Mammary epithelial cell (primary cell): ENCODE measurements at regions of chr1 and their contacts with region 1.

Region 1: DNA sequence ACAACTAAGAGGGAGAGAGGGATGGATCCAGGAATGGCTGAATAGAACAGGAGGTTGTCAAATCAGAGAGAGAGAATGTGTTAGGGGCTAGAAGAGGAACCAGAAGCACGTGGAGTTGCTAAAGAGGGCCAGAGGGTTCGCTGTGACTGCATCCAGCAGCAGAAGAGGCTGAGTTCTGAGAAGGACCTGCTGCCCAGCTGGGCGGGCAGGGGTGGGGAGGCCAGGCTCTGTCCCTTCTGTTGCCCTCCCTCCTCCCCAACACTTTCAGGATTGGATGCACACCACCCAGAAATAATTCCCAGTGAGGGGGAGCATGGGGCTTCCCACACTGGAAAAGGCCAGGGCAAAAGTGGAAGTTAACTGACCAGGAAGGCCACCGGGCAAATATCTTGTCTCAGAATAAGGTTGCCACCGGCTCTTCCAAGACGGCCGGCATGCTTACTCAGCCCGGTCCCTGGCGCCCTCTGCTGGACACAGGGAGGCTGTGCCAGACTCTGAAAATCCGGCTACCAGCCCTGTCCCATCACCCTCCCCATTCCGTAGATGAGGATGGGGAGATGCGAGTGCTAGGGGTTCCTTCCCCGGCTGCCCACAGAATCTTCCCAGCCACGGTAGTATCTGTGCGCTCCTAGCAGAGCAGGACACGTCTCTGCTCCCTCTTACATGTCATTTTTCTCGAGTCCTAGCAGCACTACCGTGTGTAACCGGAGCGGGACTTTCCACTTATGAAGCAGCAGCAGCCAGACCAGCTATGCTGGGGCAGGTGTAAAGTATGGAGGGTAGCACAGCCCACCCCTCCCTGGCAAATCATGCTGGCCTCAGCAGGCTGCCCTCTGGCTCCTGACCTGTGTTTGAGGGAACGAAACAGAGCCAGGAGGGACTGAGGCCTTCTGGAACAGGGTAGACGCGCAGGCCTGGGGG is 46.8 kb upstream of the A3GALT2 start:
- DNase-seq: peak; percentile 62
- H3K4me3 ChIP-seq: no peak overlapping the region
- H3K27ac ChIP-seq: no peak overlapping the region
- H3K4me1 ChIP-seq: peaks cover 34% of the 10 kb centered on the region
- H3K27me3 ChIP-seq: no peaks in the 10 kb centered on the region
- CTCF ChIP-seq: peak; percentile 94 to 99

Region 2: DNA sequence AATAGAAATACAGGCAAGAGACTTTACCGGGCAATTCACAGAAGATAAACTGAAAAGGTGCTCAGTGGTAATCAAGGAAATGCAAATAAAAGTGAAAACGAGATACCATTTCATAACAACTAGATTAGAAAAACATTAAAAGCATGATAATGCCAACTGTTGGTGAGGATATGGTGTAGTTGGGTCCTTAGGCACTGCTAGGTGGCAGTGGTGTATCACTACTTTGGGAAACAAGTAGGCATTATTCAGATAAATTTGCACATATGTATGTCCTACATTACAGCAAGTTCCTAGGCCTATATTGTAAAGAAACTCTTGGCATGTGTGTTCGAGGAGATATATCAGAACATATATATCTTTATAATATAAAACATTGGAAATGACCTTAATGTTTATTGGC is 255.8 kb before region 1 on chr1:
- CTCF ChIA-PET with region 1: no interaction called
- dilution Hi-C with region 1: no loop called
- in situ Hi-C with region 1: no loop called
- intact Hi-C with region 1: loop called (anchors 1 kb)
- DNase-seq: peak; percentile 26
- H3K4me3 ChIP-seq: no peak overlapping the region
- H3K27ac ChIP-seq: no peak overlapping the region
- H3K4me1 ChIP-seq: no peaks in the 10 kb centered on the region
- H3K27me3 ChIP-seq: no peaks in the 10 kb centered on the region
- CTCF ChIP-seq: peak; percentile 48 to 62

Region 3: GRCh38 chr1:33295450-33296081 is 72.2 kb before region 1 on chr1:
- CTCF ChIA-PET with region 1: no interaction called
- dilution Hi-C with region 1: no loop called
- in situ Hi-C with region 1: loop called in 1 of 2 experiments (anchors 5 kb)
- intact Hi-C with region 1: loop called (anchors 1 kb)
- DNase-seq: peak; percentile 76
- H3K4me3 ChIP-seq: no peak overlapping the region
- H3K27ac ChIP-seq: no peak overlapping the region
- H3K4me1 ChIP-seq: no peaks in the 10 kb centered on the region
- H3K27me3 ChIP-seq: no peaks in the 10 kb centered on the region
- CTCF ChIP-seq: peak; percentile 94 to 97

Region 4: DNA sequence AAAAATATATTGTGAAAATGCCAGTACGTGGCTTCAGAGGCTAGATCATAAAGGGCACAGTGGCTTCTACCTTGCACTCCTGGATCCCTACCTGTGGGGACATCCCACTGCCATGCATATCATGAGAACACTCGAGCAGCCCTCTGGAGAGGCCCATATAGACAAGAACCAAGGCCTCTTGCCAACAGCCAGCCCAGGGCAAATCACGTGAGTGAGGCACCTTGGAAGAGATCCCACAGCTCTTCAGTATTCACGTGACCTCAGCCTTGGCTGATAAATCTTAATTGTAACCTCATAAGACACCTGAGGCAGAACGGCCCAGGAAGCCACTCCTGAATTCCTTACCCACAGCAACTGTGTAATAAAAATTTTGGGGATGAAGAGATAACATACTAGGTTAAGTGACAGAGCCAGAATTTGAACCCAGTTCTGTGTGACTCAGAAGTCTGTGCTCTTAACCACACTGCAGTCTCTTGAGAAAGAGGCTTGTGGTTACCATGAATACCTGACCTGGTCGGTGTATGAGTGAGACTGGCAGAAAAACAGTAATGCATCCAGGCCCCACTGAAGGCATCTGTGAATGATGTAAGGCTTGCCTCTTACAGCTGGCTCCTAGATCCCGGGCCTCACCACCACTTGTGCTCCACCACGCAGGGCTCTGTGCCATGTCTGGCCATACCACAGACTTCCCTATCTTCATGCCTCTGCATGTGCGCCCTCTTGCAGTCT is 40.0 kb before region 1 on chr1:
- CTCF ChIA-PET with region 1: no interaction called
- dilution Hi-C with region 1: no loop called
- in situ Hi-C with region 1: no loop called
- intact Hi-C with region 1: loop called (anchors 1 kb)
- DNase-seq: peak; percentile 99
- H3K4me3 ChIP-seq: no peak overlapping the region
- H3K27ac ChIP-seq: peak overlapping the region; percentile 48
- H3K4me1 ChIP-seq: peaks cover 56% of the 10 kb centered on the region
- H3K27me3 ChIP-seq: no peaks in the 10 kb centered on the region
- CTCF ChIP-seq: peak in 1 of 2 donors; percentile 21

Region 5: GRCh38 chr1:33616773-33617172 is 249.0 kb after region 1 on chr1:
- CTCF ChIA-PET with region 1: no interaction called
- dilution Hi-C with region 1: no loop called
- in situ Hi-C with region 1: no loop called
- intact Hi-C with region 1: loop called (anchors 1 kb)
- DNase-seq: no peak
- H3K4me3 ChIP-seq: no peak overlapping the region
- H3K27ac ChIP-seq: no peak overlapping the region
- H3K4me1 ChIP-seq: no peaks in the 10 kb centered on the region
- H3K27me3 ChIP-seq: no peaks in the 10 kb centered on the region
- CTCF ChIP-seq: no peak